ENCODE measurements at regions of chr9 and their contacts with region 1.

Region 1: GRCh38 chr9:26946753-26947727 is at the start of gene PLAA:
- DNase-seq: peak; percentile 75 to 79
- H3K4me3 ChIP-seq: peak within 1 kb of the TSS; percentile 91
- H3K27ac ChIP-seq: peak within 1 kb of the TSS; percentile 74
- H3K4me1 ChIP-seq: peaks cover 9% of the 10 kb centered on the region
- H3K27me3 ChIP-seq: no peaks in the 10 kb centered on the region
- CTCF ChIP-seq: no peak
- total RNA-seq, gene PLAA: 19.7 and 23.3 TPM in 2 replicates

Region 2: DNA sequence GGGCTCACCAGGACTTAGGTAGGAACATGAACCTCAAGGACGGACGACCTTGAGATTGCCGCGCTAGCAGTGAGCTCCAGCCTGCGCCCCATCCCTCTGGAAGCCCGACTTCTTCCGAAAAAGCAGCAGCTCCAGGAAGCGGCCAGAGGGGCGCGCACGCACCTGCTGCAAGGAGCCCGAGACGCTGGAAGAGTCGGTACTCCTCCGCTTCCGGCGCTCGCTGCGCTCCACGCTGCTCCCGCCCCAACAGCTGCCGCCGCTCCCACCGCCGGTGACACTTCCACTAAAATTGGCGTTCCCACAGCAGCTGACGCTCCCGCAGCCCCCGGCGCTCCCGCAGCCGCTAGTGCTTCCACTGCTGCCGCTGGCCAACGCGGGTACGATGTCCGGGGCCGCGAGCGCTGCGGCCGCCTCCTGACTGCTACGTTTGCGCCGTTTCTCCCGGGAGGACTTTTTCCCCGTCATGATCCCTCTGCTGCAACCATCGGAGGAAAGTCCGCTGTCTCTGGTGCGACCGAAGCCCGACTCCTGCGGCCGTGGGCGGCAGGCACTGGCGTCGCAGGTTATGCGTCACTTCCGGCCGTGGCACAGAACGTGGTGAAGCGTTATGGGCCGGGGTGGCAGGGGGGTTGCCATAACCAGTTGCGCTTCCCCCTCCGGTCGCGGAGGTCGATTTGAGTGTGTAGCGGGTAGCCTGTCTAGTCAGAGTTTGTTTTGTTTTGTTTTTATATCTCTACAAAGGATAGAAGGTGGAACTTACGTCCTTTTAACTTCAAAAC is 54.6 kb before region 1 on chr9 and contains the start of gene CAAP1:
- CTCF ChIA-PET with region 1: no interaction called
- POLR2A ChIA-PET with region 1: interaction called, 5 read pairs
- intact Hi-C with region 1: loop called (anchors 1 kb)
- DNase-seq: peak; percentile 73 to 78
- H3K4me3 ChIP-seq: peak within 1 kb of the TSS; percentile 98
- H3K27ac ChIP-seq: peak within 1 kb of the TSS; percentile 96
- H3K4me1 ChIP-seq: no peaks in the 10 kb centered on the region
- H3K27me3 ChIP-seq: no peaks in the 10 kb centered on the region
- CTCF ChIP-seq: peak; percentile 44; the same call in 1 of the 2 replicates
- total RNA-seq, gene CAAP1: 12.1 and 14.0 TPM in 2 replicates

Region 3: DNA sequence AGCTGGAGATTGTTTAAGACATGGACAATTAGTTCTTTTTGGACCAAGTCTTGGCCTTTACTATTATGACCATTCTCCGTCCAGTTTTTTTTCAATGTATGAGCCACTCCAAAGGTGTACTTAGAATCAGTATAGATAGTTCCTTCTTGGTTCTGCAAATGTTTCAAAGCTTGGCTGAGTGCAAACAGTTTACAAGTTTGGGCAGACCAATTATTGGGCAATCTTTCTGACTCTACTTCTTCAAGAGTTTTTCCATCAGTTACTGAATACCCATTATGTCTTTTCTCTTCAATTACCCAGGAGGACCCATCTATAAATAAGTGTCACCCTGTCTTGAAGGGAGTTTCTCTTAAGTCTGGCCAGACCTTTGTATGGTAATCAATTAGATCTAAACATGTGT is 24.7 kb after region 1 on chr9:
- CTCF ChIA-PET with region 1: no interaction called
- POLR2A ChIA-PET with region 1: no interaction called
- intact Hi-C with region 1: no loop called
- DNase-seq: no peak
- H3K4me3 ChIP-seq: no peak overlapping the region
- H3K27ac ChIP-seq: no peak overlapping the region
- H3K4me1 ChIP-seq: no peaks in the 10 kb centered on the region
- H3K27me3 ChIP-seq: no peaks in the 10 kb centered on the region
- CTCF ChIP-seq: no peak

Measured in PC-9 (cell line).